ENCODE measurements at regions of chr7 and their contacts with region 1.

Region 1: DNA sequence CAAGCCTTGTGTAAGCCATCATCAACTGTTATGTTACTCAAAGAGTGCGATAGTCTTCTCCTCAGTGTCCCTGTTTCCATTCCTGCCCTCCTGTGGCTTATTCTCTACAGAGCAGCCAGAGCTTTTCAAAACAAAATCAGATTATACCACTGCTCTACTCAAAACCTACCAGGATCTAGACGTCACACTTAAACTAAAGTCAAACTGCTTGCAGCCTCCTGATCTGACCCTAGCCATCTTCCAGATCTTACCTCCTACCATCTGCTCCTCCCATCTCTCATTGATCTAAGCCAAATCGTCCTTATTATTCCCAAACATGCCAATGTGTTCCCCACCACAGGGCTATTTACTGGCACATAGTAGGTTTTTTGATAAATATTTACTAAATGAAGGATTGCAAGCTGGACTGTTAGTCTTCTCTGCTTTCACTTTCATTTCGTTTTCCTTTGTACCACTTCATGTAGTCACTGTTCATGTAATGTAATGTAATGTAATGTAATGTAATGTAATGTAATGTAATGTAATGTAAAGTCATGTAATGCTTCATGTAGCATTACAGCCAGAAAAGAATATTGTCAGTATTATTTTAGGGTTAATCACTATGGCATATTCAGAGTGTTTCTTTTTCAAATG is 116.1 kb downstream of the GPR37 start:
- DNase-seq: no peak
- H3K4me3 ChIP-seq: peak overlapping the region in 46 of 59 donors; percentile 1 to 55 (median 36)
- H3K27ac ChIP-seq: peak overlapping the region in 6 of 59 donors; percentile 19 to 53 (median 28)
- H3K27me3 ChIP-seq: no peaks in the 10 kb centered on the region
- CTCF ChIP-seq: no peak

Region 2: GRCh38 chr7:124188576-124188975 is 460.9 kb before region 1 on chr7:
- intact Hi-C with region 1: loop called in 1 of 2 experiments (anchors 10 kb)
- DNase-seq: no peak
- H3K4me3 ChIP-seq: no peak overlapping the region
- H3K27ac ChIP-seq: no peak overlapping the region
- H3K27me3 ChIP-seq: no peaks in the 10 kb centered on the region
- CTCF ChIP-seq: no peak

Measured in dorsolateral prefrontal cortex (tissue), 120 donors.